ENCODE measurements at regions of chr5 and their contacts with region 1.

Region 1: GRCh38 chr5:24497591-24498157 is 147.1 kb downstream of the CDH10 start:
- DNase-seq: no peak
- H3K4me3 ChIP-seq: no peak overlapping the region
- H3K27ac ChIP-seq: no peak overlapping the region
- H3K4me1 ChIP-seq: no peaks in the 10 kb centered on the region
- H3K27me3 ChIP-seq: no peaks in the 10 kb centered on the region
- CTCF ChIP-seq: no peak

Region 2: DNA sequence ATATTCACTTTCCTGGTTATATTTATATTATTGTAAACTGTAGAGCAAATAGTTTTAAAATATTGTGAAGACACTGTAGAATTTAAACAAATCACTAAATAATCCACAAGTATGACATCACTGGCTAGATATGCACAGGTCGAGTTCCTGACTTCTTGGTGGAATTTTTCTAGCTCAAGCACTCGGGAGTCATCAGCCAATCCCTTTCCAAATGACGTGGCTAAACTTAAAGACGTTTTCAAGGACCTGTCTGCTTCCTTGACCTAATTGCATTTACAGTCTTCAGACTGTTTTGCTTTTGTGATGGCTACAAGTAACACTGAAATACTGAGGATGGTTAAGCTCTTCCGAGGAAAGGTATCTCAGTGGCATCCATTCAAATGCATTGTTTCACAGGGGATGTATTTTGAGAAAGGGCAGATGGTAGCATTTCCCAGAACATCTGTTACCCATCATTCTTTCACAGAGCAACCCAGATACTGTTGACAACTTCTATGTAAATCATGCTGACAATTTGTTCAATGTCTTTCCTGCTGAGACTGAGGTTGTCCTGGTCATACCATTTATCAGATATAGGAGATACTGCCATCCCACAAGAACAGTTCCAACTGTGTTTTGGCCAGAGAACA is 115.7 kb before region 1 on chr5:
- CTCF ChIA-PET with region 1: no interaction called
- POLR2A ChIA-PET with region 1: no interaction called
- intact Hi-C with region 1: no loop called
- DNase-seq: no peak
- H3K4me3 ChIP-seq: no peak overlapping the region
- H3K27ac ChIP-seq: no peak overlapping the region
- H3K4me1 ChIP-seq: no peaks in the 10 kb centered on the region
- H3K27me3 ChIP-seq: no peaks in the 10 kb centered on the region
- CTCF ChIP-seq: no peak

Region 3: DNA sequence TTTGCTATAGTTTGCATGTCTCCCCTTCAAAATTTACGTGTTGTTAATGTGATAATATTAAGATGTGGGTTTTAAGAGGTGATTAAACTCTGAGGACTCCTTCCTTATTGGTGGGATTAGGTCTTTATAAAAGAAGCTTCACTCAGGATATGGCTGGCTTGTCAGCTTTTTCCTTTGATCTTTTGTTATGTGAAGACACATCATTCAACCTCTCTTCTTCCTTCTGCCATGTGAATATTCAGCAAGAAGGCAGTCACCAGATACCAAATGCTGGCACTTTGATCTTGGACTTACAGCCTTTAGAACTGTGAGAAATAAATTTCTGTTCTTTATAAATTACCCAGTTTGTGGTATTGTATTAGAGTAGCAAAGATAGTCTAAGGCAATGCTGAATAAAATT is 1003.0 kb after region 1 on chr5:
- CTCF ChIA-PET with region 1: no interaction called
- POLR2A ChIA-PET with region 1: interaction called, 10 read pairs
- intact Hi-C with region 1: no loop called
- DNase-seq: no peak
- H3K4me3 ChIP-seq: no peak overlapping the region
- H3K27ac ChIP-seq: no peak overlapping the region
- H3K4me1 ChIP-seq: no peaks in the 10 kb centered on the region
- H3K27me3 ChIP-seq: no peaks in the 10 kb centered on the region
- CTCF ChIP-seq: no peak

Measured in PC-9 (cell line).